GM12878 (cell line): ENCODE measurements at regions of chr3 and their contacts with region 1.

Region 1: DNA sequence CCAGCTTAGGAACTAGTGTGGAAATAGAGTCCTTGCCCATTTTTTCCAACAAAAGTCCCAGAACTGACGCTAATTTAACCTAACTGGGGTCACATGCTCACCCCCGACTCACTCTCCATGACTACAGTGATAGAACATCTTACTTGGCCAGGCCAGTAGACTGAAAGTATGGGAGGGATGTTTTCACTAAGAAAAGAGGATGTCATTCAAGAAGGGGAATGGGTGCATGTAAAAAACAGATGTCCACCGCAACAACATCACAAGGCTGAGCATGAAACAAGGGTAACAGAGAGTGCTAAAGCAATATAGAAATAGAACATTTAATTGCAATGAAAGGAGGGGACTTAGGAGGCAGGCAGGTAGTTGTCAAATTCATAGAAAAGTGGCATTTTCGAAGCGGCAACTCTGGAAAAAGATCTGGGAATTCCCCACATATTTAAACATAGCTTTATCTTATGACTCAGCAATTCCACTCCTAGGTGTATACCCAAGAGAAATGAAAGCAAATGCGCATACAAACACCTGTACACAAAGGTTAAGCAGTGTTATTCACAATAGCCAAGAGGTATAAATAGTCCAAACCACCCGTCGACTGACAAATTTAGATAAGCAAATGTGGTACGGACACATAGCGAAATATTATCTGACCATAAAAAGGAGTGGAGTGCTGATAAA is 41.1 kb upstream of the UBE2E2 start:
- DNase-seq: peak; percentile 69
- ATAC-seq: peak; percentile 74
- H3K4me3 ChIP-seq: peak overlapping the region; percentile 19; the same call in 1 of the 2 replicates
- H3K27ac ChIP-seq: peak overlapping the region; percentile 66
- H3K4me1 ChIP-seq: peaks cover 37% of the 10 kb centered on the region
- H3K27me3 ChIP-seq: no peaks in the 10 kb centered on the region
- CTCF ChIP-seq: no peak
- EP300 ChIP-seq: peak in 1 of 2 experiments; percentile 28; a peak in 2 of 4 replicates
- POLR2A ChIP-seq: no peak
- RAD21 ChIP-seq: no peak

Region 2: DNA sequence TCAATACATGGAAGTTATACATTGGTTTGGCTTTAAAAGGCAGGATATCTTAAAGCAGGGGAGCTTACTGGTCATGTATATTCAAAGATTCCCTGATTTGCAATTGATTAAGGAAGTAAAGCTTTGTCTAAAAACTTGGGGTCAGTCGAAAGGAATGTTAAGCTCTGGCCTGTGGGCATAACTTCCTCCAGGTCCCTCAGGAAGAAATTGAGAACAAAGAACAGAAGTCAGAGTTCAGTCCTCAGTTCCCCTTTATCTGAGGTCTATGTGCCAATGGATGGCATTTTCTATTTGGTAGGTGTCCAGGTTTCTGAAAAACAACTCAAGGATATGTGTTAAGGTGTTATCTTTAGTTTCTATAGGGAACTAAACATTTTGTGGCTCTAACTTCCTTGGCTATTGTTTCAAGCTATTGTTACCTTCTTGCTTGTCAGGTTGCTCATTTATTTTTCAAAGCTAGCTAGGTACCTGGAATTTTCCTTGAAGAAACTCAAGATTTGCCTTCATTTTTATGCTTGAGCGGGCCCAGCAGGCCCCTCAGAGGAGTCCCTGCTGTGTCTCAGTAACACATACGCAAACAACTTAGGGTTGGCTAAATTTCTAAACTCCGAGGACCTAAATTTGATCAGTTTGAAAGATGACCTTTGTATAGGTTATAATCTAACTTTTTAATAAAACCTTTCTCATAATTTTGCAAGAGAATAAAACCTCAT is 93.9 kb before region 1 on chr3:
- CTCF ChIA-PET with region 1: no interaction called
- POLR2A ChIA-PET with region 1: no interaction called
- RAD21 ChIA-PET with region 1: no interaction called
- SMC1A ChIA-PET with region 1: no interaction called
- in situ Hi-C with region 1: no loop called
- intact Hi-C with region 1: no loop called
- DNase-seq: no peak
- ATAC-seq: no peak
- H3K4me3 ChIP-seq: no peak overlapping the region
- H3K27ac ChIP-seq: no peak overlapping the region
- H3K4me1 ChIP-seq: peaks cover 12% of the 10 kb centered on the region
- H3K27me3 ChIP-seq: no peaks in the 10 kb centered on the region
- CTCF ChIP-seq: no peak
- EP300 ChIP-seq: no peak
- POLR2A ChIP-seq: no peak
- RAD21 ChIP-seq: no peak

Region 3: GRCh38 chr3:23174426-23175039 is 12.5 kb after region 1 on chr3:
- CTCF ChIA-PET with region 1: interaction called, 3 read pairs
- POLR2A ChIA-PET with region 1: no interaction called
- RAD21 ChIA-PET with region 1: no interaction called
- SMC1A ChIA-PET with region 1: interaction called, 12 read pairs
- in situ Hi-C with region 1: no loop called
- intact Hi-C with region 1: no loop called
- DNase-seq: no peak
- ATAC-seq: no peak
- H3K4me3 ChIP-seq: no peak overlapping the region
- H3K27ac ChIP-seq: no peak overlapping the region
- H3K4me1 ChIP-seq: no peaks in the 10 kb centered on the region
- H3K27me3 ChIP-seq: no peaks in the 10 kb centered on the region
- CTCF ChIP-seq: no peak
- EP300 ChIP-seq: no peak
- POLR2A ChIP-seq: no peak
- RAD21 ChIP-seq: no peak

Region 4: GRCh38 chr3:23442598-23443383 is 280.8 kb after region 1 on chr3:
- CTCF ChIA-PET with region 1: no interaction called
- POLR2A ChIA-PET with region 1: no interaction called
- RAD21 ChIA-PET with region 1: no interaction called
- SMC1A ChIA-PET with region 1: no interaction called
- in situ Hi-C with region 1: no loop called
- intact Hi-C with region 1: loop called (anchors 5 kb)
- DNase-seq: no peak
- ATAC-seq: peak; percentile 64
- H3K4me3 ChIP-seq: no peak overlapping the region
- H3K27ac ChIP-seq: no peak overlapping the region
- H3K4me1 ChIP-seq: peaks cover 17% of the 10 kb centered on the region
- H3K27me3 ChIP-seq: no peaks in the 10 kb centered on the region
- CTCF ChIP-seq: no peak
- EP300 ChIP-seq: no peak
- POLR2A ChIP-seq: no peak
- RAD21 ChIP-seq: no peak